ENCODE measurements at regions of chr16 and their contacts with region 1.

Region 1: GRCh38 chr16:85717393-85718121 is 28.8 kb upstream of the GINS2 start:
- DNase-seq: peak; percentile 63 to 84
- ATAC-seq: peak; percentile 42
- H3K4me3 ChIP-seq: no peak overlapping the region
- H3K27ac ChIP-seq: no peak overlapping the region
- H3K4me1 ChIP-seq: no peaks in the 10 kb centered on the region
- H3K27me3 ChIP-seq: no peaks in the 10 kb centered on the region

Region 2: GRCh38 chr16:85275533-85276249 is 441.9 kb before region 1 on chr16:
- intact Hi-C with region 1: loop called (anchors 10 kb)
- DNase-seq: peak; percentile 73 to 93
- ATAC-seq: peak; percentile 75
- H3K4me3 ChIP-seq: no peak overlapping the region
- H3K27ac ChIP-seq: no peak overlapping the region
- H3K4me1 ChIP-seq: no peaks in the 10 kb centered on the region
- H3K27me3 ChIP-seq: no peaks in the 10 kb centered on the region

Region 3: GRCh38 chr16:85305996-85306792 is 411.4 kb before region 1 on chr16:
- intact Hi-C with region 1: loop called (anchors 1 to 5 kb)
- DNase-seq: peak; percentile 96 to 97
- ATAC-seq: peak; percentile 84
- H3K4me3 ChIP-seq: no peak overlapping the region
- H3K27ac ChIP-seq: no peak overlapping the region
- H3K4me1 ChIP-seq: no peaks in the 10 kb centered on the region
- H3K27me3 ChIP-seq: no peaks in the 10 kb centered on the region

Region 4: DNA sequence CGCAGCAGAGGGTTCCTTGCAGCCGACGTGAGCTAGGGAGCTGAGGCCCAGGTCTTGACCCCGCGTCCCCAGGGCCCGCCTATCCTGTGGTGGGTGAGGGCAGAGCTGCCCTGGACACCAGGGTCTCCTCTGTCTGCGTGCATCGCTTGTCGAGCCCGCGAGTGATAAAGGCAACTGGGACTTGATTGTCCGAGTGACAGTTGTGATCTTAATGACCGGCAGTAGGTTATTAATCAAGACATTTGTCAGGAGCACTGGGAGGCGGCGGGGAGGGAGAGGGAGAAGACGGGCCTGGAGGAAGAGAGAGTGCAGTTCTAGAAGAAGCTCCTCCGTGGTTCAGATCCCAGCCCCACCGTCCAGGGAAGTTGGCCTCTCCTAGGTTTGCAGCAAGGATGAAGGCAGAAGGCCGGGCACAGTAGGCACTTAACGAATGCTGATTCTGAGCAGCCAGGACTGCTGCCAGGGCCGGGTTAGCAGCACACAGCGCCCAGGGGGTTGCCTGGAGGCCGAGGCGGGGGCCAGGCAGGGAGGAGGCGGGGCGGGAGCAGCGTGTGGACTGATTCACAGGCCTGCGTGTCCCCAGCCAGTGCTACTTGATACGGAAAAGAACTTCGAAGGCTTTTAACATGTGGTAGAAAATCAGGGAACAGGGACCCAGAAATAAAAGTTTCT is 115.7 kb before region 1 on chr16:
- intact Hi-C with region 1: no loop called
- DNase-seq: no peak
- ATAC-seq: no peak
- H3K4me3 ChIP-seq: no peak overlapping the region
- H3K27ac ChIP-seq: no peak overlapping the region
- H3K4me1 ChIP-seq: no peaks in the 10 kb centered on the region
- H3K27me3 ChIP-seq: no peaks in the 10 kb centered on the region

Region 5: DNA sequence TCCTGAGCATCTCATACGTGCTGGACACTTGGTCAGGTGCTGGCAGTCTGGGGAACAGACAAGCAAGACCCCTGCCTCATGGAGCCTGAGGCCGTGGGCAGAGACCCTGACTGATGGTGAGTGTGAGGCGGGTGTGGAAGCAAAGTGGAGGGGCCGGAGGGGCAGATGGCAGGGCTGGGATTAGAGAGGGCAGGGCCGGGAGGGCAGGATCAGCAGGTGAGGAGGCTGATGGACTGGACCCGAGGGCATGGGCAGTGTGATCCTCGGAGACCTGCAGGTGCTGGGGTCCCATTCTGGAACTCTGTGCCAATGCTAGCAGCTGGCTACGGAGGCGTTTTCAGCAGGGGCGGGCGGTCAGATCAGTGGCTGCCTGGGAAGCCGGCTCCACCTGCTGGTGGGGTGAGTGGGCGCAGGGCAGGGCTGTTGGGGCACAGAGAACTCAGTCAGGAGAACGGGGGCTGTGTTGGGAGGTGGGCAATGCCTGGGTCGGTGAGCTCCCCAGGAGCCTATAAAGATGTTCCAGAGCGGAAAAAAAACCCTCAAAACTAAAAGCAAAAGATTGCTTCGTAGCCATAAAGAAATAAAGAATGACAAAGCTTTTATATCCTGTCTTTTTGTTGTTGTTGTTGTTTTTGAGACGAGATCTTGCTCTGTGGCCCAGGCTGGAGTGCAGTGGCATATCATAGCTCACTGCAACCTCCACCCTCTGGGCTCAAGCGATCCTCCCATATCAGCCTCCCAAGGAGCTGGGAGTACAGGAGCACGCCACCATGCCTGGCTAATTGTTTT is 42.3 kb after region 1 on chr16:
- intact Hi-C with region 1: no loop called
- DNase-seq: no peak
- ATAC-seq: no peak
- H3K4me3 ChIP-seq: no peak overlapping the region
- H3K27ac ChIP-seq: no peak overlapping the region
- H3K4me1 ChIP-seq: no peaks in the 10 kb centered on the region
- H3K27me3 ChIP-seq: no peaks in the 10 kb centered on the region